ENCODE measurements at regions of chrX and their contacts with region 1.

Region 1: DNA sequence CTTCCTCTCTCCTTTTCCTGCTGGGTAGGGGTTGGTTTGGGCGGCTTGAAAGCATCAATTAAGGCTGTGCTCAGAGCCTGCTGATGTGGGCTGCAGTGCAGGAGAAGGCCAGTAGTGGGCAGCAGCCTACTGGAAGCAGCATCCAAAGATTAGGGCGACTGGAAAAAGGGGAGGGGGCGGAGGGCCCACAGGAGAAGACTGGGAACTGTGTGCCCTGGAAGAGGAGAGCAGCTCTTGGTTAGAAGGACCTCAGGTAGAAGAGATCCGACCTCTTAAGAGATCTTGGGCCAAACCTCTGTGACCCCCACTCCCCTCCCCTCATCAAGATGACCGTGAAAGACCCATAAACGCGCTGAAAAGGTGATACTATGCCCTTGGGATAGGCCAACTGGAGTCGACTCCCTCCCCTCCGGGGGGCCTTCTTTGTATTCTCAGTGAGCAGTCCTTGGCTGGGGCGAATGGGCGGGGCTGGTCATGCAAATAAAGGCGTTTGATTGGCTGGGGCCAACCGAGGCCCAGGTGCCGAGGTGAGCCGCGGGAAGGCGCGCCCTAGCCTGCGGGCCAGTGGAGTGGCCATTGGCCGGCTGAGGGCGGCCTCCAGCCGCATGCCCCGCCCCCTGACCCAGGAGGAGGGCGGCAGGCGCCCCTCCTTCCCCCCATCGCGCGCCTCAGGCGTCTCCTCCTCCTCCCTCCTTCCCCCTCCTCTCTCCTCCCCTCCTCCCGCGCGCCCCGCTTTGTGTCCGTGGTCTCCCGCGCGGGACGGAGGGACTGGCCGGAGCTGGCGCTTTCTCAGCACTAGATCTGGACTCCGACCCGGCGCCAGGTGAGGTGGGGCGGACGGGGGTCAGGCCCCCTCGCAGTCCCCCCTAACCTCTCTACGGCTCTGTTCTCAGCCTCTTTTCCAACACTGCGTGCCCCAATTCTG is 10.1 kb downstream of the DLG3 start:
- DNase-seq: peak; percentile 92 to 96 (median 95)
- ATAC-seq: peak; percentile 92
- H3K4me3 ChIP-seq: peak overlapping the region; percentile 39 to 73
- H3K27ac ChIP-seq: peak overlapping the region; percentile 68 to 96 (median 94)
- H3K4me1 ChIP-seq: peaks cover 23% of the 10 kb centered on the region
- H3K27me3 ChIP-seq: no peaks in the 10 kb centered on the region
- CTCF ChIP-seq: peak; percentile 65 to 94 (median 90)
- POLR2A ChIP-seq: peak in 2 of 3 donors; percentile 57 to 60

Region 2: DNA sequence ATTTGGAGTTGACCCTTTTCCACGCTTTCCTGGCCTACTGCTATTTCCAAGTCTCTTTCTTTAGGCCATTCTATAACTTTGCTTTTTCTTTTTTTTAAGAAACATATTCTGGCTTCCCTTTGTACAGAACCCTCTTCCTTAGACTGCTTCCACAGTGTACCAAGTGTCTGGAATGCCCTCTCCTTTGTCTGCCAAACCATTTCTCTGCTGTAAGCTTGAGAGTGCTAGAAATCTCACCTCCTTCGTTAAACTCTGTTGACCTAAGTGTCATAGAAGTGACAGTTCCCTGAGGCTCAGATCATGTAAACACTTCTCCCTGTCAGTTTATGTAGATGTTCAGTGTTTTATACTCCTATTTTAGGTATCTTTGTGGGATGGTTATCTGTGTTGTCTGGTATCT is 730.4 kb before region 1 on chrX:
- intact Hi-C with region 1: no loop called
- DNase-seq: no peak
- ATAC-seq: no peak
- H3K4me3 ChIP-seq: no peak overlapping the region
- H3K27ac ChIP-seq: no peak overlapping the region
- H3K4me1 ChIP-seq: no peaks in the 10 kb centered on the region
- H3K27me3 ChIP-seq: no peaks in the 10 kb centered on the region
- CTCF ChIP-seq: no peak
- POLR2A ChIP-seq: no peak

Region 3: DNA sequence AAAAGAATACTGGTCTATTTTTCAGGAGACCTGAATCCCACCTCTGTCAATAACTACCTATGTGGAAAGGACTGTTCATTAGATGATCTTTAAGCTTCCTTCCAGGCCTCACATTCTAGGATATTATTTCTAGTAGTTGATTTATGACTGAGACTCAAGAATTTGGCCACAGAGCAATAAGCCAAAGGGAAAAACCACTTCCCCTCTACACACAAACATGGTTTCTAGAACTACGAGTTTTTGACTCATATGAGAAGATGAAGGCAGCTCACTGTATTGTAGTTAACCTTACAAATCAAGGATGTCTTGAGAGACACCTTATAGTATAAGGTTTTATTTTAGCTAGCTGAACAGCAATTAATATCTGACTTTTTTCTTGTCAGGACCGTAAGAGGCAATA is 68.5 kb before region 1 on chrX:
- intact Hi-C with region 1: no loop called
- DNase-seq: no peak
- ATAC-seq: no peak
- H3K4me3 ChIP-seq: no peak overlapping the region
- H3K27ac ChIP-seq: no peak overlapping the region
- H3K4me1 ChIP-seq: no peaks in the 10 kb centered on the region
- H3K27me3 ChIP-seq: no peaks in the 10 kb centered on the region
- CTCF ChIP-seq: no peak
- POLR2A ChIP-seq: no peak

Region 4: DNA sequence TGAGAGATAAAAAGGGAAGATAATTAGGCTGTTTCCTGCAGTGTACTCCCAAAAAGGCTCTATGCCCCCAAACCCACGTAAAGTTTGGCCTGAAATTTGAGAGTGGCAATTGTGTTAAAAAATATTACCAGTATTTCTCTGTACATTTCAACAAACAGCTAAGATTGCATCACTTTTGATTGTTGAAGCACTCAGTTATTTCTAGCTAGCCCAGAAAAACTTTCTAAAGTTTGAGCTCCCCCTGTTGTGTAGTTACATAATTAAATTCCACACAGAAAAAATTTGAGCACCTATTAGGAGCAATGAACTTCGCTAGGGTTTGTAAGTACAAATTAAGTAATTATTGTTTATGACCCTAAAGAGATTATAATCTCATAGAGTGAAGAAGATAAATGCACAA is 99.4 kb after region 1 on chrX:
- intact Hi-C with region 1: loop called (anchors 10 kb)
- DNase-seq: no peak
- ATAC-seq: peak; percentile 69
- H3K4me3 ChIP-seq: no peak overlapping the region
- H3K27ac ChIP-seq: peak overlapping the region in 3 of 4 donors; percentile 46 to 76 (median 62)
- H3K4me1 ChIP-seq: peaks cover 21% of the 10 kb centered on the region
- H3K27me3 ChIP-seq: no peaks in the 10 kb centered on the region
- CTCF ChIP-seq: peak in 5 of 7 experiments; percentile 8 to 66 (median 44)
- POLR2A ChIP-seq: no peak